ENCODE measurements at regions of chr5 and their contacts with region 1.

Region 1: GRCh38 chr5:36151434-36152323 is at the starts of genes LMBRD2 and SKP2:
- DNase-seq: peak; percentile 98
- H3K4me3 Mint-ChIP-seq: peak within 1 kb of the TSS; percentile 92
- H3K27ac Mint-ChIP-seq: peak within 1 kb of the TSS; percentile 91
- H3K4me1 Mint-ChIP-seq: peaks cover 39% of the 10 kb centered on the region
- H3K27me3 Mint-ChIP-seq: no peaks in the 10 kb centered on the region
- CTCF ChIP-seq: no peak
- total RNA-seq, gene LMBRD2: 7.9 and 9.6 TPM in 2 replicates
- total RNA-seq, gene SKP2: 19.3 and 21.7 TPM in 2 replicates

Region 2: DNA sequence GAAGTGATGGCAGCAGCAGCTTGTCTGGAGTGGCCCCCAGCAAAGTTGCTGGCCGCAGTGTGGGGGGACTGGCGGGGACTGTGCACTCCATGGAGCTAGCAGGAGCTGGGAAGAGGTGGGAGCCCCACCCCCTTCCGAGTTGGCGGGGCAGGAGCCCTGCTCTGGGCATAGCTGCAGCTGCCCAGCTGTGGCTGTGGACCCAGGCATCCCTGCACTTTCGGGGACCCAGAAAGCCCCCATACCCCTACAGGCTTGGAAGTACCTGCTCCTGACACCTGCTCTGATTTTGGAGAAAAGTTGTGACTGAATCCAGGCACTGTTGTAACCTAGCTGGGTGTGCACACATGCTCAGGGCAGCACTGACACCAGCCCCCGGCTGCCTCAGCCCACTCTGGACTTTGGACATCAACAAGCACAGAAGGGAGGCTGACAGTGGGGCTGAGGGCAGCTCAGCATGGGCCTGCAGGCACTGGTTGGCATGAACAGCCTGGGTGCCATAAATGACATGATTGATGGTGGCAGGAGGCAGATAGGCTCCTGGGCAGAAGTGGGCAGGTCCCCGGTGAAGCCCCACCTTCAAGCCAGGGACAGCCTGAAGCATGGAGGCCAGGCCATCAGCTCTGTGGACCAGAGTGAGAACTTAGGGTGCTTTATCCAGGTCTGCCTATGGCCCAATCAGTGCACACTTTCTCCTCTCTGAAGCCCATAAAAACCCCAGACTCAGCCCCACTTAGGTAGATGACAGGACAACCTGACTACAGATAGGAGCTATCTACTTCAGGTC is 12.6 kb before region 1 on chr5:
- CTCF ChIA-PET with region 1: interaction called, 3 read pairs
- POLR2A ChIA-PET with region 1: interaction called, 10 read pairs
- intact Hi-C with region 1: no loop called
- DNase-seq: no peak
- H3K4me3 Mint-ChIP-seq: no peak overlapping the region
- H3K27ac Mint-ChIP-seq: no peak overlapping the region
- H3K4me1 Mint-ChIP-seq: no peaks in the 10 kb centered on the region
- H3K27me3 Mint-ChIP-seq: no peaks in the 10 kb centered on the region
- CTCF ChIP-seq: no peak

Region 3: DNA sequence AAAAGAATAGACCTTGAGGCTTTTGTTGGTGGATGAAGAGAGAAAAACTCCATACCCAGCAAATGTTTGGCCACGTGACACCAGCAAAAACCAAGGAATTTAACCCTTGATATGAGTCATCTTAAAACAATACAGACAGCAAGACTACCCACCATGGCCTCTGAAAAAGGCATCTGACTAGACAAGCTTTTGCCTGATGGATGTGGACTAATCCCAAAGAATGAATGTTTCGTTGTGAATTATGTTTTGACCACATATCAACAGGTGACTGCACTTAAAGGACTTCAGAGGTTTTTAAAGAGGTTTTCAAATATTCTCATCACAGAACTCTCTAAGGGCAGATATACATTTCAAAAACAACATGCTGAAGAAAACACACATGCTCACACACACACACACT is 421.8 kb after region 1 on chr5:
- CTCF ChIA-PET with region 1: no interaction called
- POLR2A ChIA-PET with region 1: no interaction called
- intact Hi-C with region 1: no loop called
- DNase-seq: peak; percentile 60
- H3K4me3 Mint-ChIP-seq: no peak overlapping the region
- H3K27ac Mint-ChIP-seq: no peak overlapping the region
- H3K4me1 Mint-ChIP-seq: peaks cover 19% of the 10 kb centered on the region
- H3K27me3 Mint-ChIP-seq: no peaks in the 10 kb centered on the region
- CTCF ChIP-seq: no peak